Aorta (tissue), 5 donors: ENCODE measurements at regions of chr15 and their contacts with region 1.

Region 1: GRCh38 chr15:97909291-97909891 is 51.1 kb upstream of the ARRDC4 start:
- DNase-seq: peak; percentile 58 to 85
- ATAC-seq: peak; percentile 73
- H3K4me3 ChIP-seq: no peak overlapping the region
- H3K27ac ChIP-seq: no peak overlapping the region
- H3K4me1 ChIP-seq: no peaks in the 10 kb centered on the region
- H3K27me3 ChIP-seq: no peaks in the 10 kb centered on the region

Region 2: DNA sequence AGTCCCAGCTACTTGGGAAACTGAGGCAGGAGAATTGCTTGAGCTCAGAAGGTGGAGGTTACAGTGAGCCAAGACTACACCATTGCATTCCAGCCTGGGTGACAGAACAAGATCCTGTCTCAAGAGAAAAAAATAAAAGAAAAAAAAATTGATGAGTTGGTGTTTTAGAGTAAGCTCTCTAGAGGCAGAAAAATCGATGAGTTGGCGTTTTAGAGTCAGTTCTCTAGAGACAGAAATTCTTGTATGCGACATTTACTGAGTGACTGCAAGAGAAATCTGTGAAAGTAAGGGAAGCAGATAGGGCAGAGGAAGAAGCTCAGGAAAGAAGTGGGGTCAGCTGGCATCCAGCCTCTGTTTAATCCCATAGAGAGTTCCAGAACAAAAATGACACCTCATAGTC is 247.6 kb before region 1 on chr15:
- intact Hi-C with region 1: no loop called
- DNase-seq: no peak
- ATAC-seq: no peak
- H3K4me3 ChIP-seq: no peak overlapping the region
- H3K27ac ChIP-seq: no peak overlapping the region
- H3K4me1 ChIP-seq: no peaks in the 10 kb centered on the region
- H3K27me3 ChIP-seq: no peaks in the 10 kb centered on the region

Region 3: DNA sequence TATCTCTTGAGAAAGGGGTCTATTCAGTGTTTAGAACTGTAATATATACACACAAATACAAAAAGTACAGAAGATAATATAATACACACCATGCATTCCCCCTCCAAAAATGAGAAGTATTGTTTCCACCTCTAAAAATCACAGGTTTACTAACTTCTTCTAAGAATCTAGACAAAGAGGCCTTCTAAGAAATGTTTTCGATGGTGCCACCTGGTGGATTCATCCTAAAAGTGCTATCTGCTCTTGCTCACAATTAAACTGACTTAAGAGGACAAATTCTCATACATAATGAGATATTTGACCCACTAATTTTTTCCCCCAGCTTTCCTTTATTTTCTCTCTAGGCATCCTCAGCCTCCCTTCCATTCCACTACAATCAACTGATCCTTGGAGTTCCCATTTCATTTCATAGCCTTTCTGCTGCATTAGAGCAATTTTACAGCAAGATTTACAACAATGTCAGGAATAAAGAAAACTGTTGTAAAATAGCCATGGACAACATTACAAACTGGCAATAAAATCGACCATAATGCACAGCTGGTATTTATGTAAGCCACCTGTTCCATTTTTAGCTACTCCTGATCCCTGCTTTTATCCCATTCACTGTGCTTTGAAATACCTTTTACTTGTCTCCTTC is 175.7 kb after region 1 on chr15:
- intact Hi-C with region 1: loop called (anchors 2 kb)
- DNase-seq: no peak
- ATAC-seq: no peak
- H3K4me3 ChIP-seq: no peak overlapping the region
- H3K27ac ChIP-seq: no peak overlapping the region
- H3K4me1 ChIP-seq: peaks cover 0 to 1% of the 10 kb centered on the region in 2 donors
- H3K27me3 ChIP-seq: no peaks in the 10 kb centered on the region

Region 4: GRCh38 chr15:98177924-98178592 is 268.7 kb after region 1 on chr15:
- intact Hi-C with region 1: loop called (anchors 5 to 10 kb)
- DNase-seq: no peak
- ATAC-seq: peak; percentile 67
- H3K4me3 ChIP-seq: no peak overlapping the region
- H3K27ac ChIP-seq: no peak overlapping the region
- H3K4me1 ChIP-seq: no peaks in the 10 kb centered on the region
- H3K27me3 ChIP-seq: no peaks in the 10 kb centered on the region

Region 5: GRCh38 chr15:98292442-98293240 is 383.2 kb after region 1 on chr15:
- intact Hi-C with region 1: loop called (anchors 10 kb)
- DNase-seq: peak in 1 of 2 donors; percentile 84
- ATAC-seq: peak; percentile 29
- H3K4me3 ChIP-seq: no peak overlapping the region
- H3K27ac ChIP-seq: no peak overlapping the region
- H3K4me1 ChIP-seq: no peaks in the 10 kb centered on the region
- H3K27me3 ChIP-seq: no peaks in the 10 kb centered on the region

Region 6: DNA sequence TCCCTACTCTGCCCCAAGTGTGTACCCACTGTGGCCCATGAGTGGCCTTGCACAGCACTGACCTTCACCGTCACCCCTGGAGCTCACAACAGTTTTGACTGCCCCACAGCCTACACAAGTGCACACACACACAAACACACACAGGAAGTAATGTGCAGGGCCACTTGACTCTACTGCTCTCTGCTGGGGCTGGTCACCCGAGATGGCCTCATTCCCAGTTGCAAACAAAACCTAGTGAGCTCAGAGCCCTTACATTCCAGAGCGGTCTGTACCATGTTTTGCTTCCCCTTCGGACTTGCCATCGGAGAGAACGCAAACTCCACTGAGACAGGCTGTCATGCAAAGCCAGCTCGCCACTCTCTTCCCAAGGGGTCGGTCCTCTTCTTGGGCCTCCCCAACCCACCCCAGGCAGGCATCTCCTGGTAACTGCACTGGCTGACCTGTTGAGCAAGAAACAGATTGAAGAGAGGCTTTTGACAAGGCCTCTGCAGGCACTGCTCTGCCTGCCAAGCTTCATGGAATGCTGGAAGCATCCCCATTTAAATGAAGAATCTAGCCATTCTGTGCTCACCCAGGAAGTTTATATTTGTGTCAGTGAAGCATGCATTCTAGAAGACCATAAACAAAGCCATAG is 506.9 kb after region 1 on chr15:
- intact Hi-C with region 1: loop called (anchors 5 to 10 kb)
- DNase-seq: no peak
- ATAC-seq: no peak
- H3K4me3 ChIP-seq: no peak overlapping the region
- H3K27ac ChIP-seq: no peak overlapping the region
- H3K4me1 ChIP-seq: no peaks in the 10 kb centered on the region
- H3K27me3 ChIP-seq: no peaks in the 10 kb centered on the region

Region 7: GRCh38 chr15:98428253-98428989 is 519.0 kb after region 1 on chr15:
- intact Hi-C with region 1: loop called in 1 of 2 experiments (anchors 10 kb)
- DNase-seq: peak; percentile 76 to 93
- ATAC-seq: peak; percentile 93
- H3K4me3 ChIP-seq: peak overlapping the region in 1 of 2 donors; percentile 36
- H3K27ac ChIP-seq: peak overlapping the region in 1 of 2 donors; percentile 82
- H3K4me1 ChIP-seq: no peaks in the 10 kb centered on the region
- H3K27me3 ChIP-seq: no peaks in the 10 kb centered on the region